Motor neuron (in vitro differentiated cells): ENCODE measurements at regions of chr3 and their contacts with region 1.

Region 1: GRCh38 chr3:117193390-117193789 is 483.8 kb downstream of the TUSC7 start:
- ATAC-seq: peak in 1 of 8 experiments; percentile 31
- H3K4me3 ChIP-seq: no peak overlapping the region
- H3K27ac ChIP-seq: no peak overlapping the region
- H3K4me1 ChIP-seq: no peaks in the 10 kb centered on the region

Region 2: GRCh38 chr3:117026401-117026800 is 167.0 kb before region 1 on chr3:
- in situ Hi-C with region 1: no loop called
- ATAC-seq: no peak
- H3K4me3 ChIP-seq: no peak overlapping the region
- H3K27ac ChIP-seq: no peak overlapping the region
- H3K4me1 ChIP-seq: peaks cover 0 to 2% of the 10 kb centered on the region in 2 donors

Region 3: DNA sequence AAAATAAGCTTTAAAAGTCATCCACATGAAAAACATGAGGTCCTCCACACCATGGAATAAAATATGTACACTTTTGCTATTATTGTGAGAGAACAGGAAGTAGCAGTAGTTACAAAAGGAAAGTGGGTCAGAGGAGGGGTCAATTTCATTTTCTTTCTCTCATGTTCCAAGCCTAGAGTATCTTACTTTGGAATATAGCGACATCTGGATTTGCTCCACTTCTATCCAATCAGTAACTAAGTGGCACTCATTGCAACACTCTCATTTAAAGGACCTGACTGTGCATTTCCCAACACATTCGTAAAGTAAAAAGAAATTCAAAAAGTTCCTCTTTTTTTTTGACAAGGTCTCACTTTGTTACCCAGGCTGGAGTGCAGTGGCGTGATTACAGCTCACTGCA is 153.5 kb after region 1 on chr3:
- in situ Hi-C with region 1: loop called in 1 of 9 experiments (anchors 25 kb)
- ATAC-seq: no peak
- H3K4me3 ChIP-seq: no peak overlapping the region
- H3K27ac ChIP-seq: no peak overlapping the region
- H3K4me1 ChIP-seq: peaks cover 4 to 5% of the 10 kb centered on the region in 2 donors